Activated naive CD4-positive, alpha-beta T cell treated with anti-CD3 and anti-CD28 coated beads for 36 hours (primary cell): ENCODE measurements at regions of chr2 and their contacts with region 1.

Region 1: DNA sequence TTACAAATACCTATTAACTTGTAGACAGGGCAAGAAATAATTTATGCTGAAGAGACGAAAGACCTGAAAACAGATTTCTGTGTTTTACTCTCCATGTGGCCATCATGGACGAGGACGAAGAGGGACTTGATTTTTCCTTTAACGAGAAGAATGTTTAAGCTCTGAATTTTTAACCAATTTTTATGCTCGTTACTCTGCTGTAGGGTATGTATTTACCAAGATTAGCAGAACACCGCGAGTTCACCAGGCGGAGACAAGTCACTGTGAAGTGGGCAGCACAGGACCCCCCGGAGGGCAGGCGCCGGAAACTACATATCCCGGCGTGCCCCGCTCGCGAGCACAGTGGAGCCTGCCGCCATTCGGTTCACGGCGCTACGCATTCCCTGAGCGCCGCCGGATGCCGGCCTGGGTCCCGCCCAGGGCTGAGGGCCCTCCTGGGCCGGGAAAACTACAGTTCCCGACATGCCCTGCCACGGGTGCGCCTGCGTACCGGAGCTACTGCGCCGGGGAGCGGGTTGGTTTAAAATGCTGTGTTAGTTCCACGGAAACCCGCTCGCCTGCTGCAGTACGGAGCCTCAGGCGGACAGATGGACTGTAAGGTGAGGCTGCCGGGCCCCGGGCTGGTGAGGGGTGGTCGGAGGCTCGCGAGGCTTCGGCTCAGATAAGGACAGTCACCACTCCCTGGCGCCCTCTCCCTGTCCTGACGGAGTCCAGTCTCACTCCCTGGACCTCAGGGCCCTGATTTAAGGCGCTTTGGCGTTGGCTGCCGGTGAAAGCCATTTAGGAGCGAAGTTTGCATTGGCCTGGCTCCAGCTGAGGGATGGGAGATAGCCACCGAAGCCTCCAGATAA is at the start of gene CCDC150:
- DNase-seq: peak; percentile 97
- H3K4me3 Mint-ChIP-seq: peak within 1 kb of the TSS; percentile 92
- H3K27ac Mint-ChIP-seq: peak within 1 kb of the TSS; percentile 48
- H3K4me1 Mint-ChIP-seq: peaks cover 11% of the 10 kb centered on the region
- H3K27me3 Mint-ChIP-seq: peaks cover 1% of the 10 kb centered on the region
- total RNA-seq, gene CCDC150: 10.1 to 10.8 TPM

Region 2: DNA sequence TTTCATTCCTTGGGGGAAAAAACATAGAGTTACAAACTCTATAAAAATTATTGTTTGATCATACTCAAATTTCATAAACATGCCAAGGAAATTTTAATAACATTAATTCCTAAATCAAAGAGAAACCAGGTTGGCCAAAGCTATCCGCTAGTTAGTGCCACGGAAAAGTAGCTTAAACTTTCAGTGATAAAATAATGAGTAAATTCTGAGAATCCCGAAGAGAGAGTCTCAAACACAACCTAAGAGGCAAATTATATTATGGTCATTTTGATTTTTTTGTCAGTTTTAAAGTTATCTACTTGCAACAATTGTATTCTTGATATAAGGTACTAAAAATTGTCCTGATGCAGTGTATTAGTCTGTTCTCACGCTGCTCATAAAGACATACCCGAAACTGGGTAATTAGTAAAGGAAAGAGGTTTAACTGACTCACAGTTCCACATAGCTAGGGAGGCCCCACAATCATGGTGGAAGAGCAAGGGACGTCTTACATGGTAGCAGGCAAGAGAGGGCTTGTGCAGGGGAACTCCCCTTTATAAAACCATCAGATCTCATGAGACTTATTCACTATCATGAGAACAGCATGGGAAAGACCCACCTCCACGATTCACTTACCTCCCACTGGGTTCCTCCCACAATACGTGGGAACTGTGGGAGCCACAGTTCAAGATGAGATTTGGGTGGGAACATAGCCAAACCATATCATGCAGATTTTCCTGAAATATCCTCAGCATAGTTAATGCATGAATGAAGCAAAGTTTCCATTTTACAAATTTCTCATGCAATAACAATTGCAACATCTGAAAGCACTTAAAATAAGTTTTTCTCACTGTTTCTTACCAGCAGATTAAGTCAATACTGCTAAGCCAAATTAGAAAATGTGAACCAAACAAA is 262.2 kb before region 1 on chr2:
- CTCF ChIA-PET with region 1: no interaction called
- intact Hi-C with region 1: loop called (anchors 1 kb)
- DNase-seq: peak; percentile 62
- H3K4me3 Mint-ChIP-seq: no peak overlapping the region
- H3K27ac Mint-ChIP-seq: peak overlapping the region; percentile 50
- H3K4me1 Mint-ChIP-seq: peaks cover 12% of the 10 kb centered on the region
- H3K27me3 Mint-ChIP-seq: no peaks in the 10 kb centered on the region

Region 3: GRCh38 chr2:196660244-196660643 is 20.8 kb after region 1 on chr2:
- CTCF ChIA-PET with region 1: no interaction called
- intact Hi-C with region 1: no loop called
- DNase-seq: no peak
- H3K4me3 Mint-ChIP-seq: no peak overlapping the region
- H3K27ac Mint-ChIP-seq: no peak overlapping the region
- H3K4me1 Mint-ChIP-seq: no peaks in the 10 kb centered on the region
- H3K27me3 Mint-ChIP-seq: no peaks in the 10 kb centered on the region

Region 4: GRCh38 chr2:196798980-196799379 is 159.6 kb after region 1 on chr2:
- CTCF ChIA-PET with region 1: no interaction called
- intact Hi-C with region 1: loop called (anchors 1 kb)
- DNase-seq: no peak
- H3K4me3 Mint-ChIP-seq: peak overlapping the region; percentile 91
- H3K27ac Mint-ChIP-seq: peak overlapping the region; percentile 90
- H3K4me1 Mint-ChIP-seq: peaks cover 44% of the 10 kb centered on the region
- H3K27me3 Mint-ChIP-seq: peaks cover 3% of the 10 kb centered on the region

Region 5: GRCh38 chr2:196887431-196887830 is 248.0 kb after region 1 on chr2:
- CTCF ChIA-PET with region 1: no interaction called
- intact Hi-C with region 1: no loop called
- DNase-seq: no peak
- H3K4me3 Mint-ChIP-seq: no peak overlapping the region
- H3K27ac Mint-ChIP-seq: no peak overlapping the region
- H3K4me1 Mint-ChIP-seq: no peaks in the 10 kb centered on the region
- H3K27me3 Mint-ChIP-seq: no peaks in the 10 kb centered on the region

Region 6: GRCh38 chr2:197322724-197323720 is 683.6 kb after region 1 on chr2:
- CTCF ChIA-PET with region 1: no interaction called
- intact Hi-C with region 1: loop called (anchors 5 kb)
- DNase-seq: peak; percentile 41
- H3K4me3 Mint-ChIP-seq: peak overlapping the region; percentile 62
- H3K27ac Mint-ChIP-seq: peak overlapping the region; percentile 88
- H3K4me1 Mint-ChIP-seq: peaks cover 73% of the 10 kb centered on the region
- H3K27me3 Mint-ChIP-seq: no peaks in the 10 kb centered on the region

Region 7: DNA sequence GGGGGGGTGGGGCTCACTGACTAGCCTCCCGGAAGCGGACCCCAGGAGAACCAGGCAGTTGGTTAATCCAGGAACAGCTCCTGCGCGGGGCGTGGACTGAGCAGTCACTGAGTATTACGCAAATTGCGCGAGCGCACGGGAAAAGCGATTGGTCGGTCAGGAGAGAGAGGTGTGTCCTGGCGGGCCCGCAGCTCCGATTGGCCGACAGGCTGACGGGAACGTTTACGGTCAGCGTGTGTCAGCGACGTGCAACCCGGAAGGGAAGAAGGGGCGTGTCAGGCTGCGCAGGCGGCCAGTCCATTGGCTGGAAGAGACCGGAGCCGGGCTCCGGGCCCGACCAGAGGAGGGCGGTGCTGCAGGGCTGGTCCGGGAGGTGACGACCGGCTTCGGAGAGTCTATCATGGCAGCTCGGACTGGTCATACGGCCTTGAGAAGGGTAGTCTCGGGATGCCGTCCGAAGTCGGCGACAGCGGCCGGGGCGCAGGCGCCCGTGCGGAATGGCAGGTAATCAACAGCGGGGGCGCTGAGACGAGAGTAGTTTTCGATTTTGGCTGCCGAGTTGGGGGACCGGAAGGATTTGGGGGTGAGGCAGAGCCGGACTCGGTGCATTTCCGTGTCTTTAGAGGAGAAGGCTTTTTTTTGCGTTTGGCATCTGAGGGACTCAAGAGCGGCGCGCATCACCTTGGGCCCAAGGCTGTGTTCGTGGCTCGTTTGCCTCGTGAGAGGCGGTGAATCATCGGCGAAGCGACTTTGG is 813.9 kb after region 1 on chr2 and contains the start of gene COQ10B:
- CTCF ChIA-PET with region 1: no interaction called
- intact Hi-C with region 1: loop called (anchors 1 kb)
- DNase-seq: peak; percentile 99
- H3K4me3 Mint-ChIP-seq: peak within 1 kb of the TSS; percentile 100
- H3K27ac Mint-ChIP-seq: peak within 1 kb of the TSS; percentile 100
- H3K4me1 Mint-ChIP-seq: peaks cover 45% of the 10 kb centered on the region
- H3K27me3 Mint-ChIP-seq: no peaks in the 10 kb centered on the region
- total RNA-seq, gene COQ10B: 17.5 to 17.8 TPM